ENCODE measurements at regions of chr1 and their contacts with region 1.

Region 1: GRCh38 chr1:180415985-180416633 is 86.3 kb downstream of the ACBD6 start:
- DNase-seq: peak; percentile 41
- H3K4me3 ChIP-seq: no peak overlapping the region
- H3K27ac ChIP-seq: no peak overlapping the region
- H3K4me1 ChIP-seq: no peaks in the 10 kb centered on the region
- H3K27me3 ChIP-seq: no peaks in the 10 kb centered on the region
- CTCF ChIP-seq: peak; percentile 27 to 39
- POLR2A ChIP-seq: no peak

Region 2: GRCh38 chr1:180178511-180179161 is 237.5 kb before region 1 on chr1:
- CTCF ChIA-PET with region 1: interaction called, 23 read pairs
- POLR2A ChIA-PET with region 1: no interaction called
- dilution Hi-C with region 1: no loop called
- intact Hi-C with region 1: no loop called
- DNase-seq: peak; percentile 64
- H3K4me3 ChIP-seq: no peak overlapping the region
- H3K27ac ChIP-seq: no peak overlapping the region
- H3K4me1 ChIP-seq: no peaks in the 10 kb centered on the region
- H3K27me3 ChIP-seq: no peaks in the 10 kb centered on the region
- CTCF ChIP-seq: peak; percentile 91 to 93
- POLR2A ChIP-seq: no peak

Region 3: DNA sequence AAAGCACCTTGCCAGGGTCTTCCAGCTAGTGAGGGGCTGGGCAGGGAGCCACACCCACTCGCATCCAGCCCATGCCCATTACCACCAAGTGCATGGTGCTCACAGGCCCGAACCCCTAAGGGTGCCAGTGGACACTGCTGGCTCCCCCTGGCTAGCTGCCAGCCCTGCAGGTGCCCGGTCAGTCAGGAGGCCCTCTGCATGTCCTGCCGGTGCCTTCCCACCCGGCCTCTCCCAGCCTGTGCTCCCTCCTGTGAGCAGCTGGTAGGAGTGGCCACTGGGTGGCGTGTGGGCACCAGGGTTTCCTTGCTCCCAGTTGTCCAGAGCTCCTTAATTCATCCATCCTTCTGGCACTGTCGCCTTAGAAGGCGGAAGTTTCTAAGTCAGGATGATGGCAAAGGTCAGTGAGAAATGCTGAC is 228.0 kb before region 1 on chr1:
- CTCF ChIA-PET with region 1: interaction called, 70 read pairs
- POLR2A ChIA-PET with region 1: no interaction called
- dilution Hi-C with region 1: no loop called
- intact Hi-C with region 1: loop called (anchors 1 kb)
- DNase-seq: peak; percentile 44
- H3K4me3 ChIP-seq: no peak overlapping the region
- H3K27ac ChIP-seq: no peak overlapping the region
- H3K4me1 ChIP-seq: no peaks in the 10 kb centered on the region
- H3K27me3 ChIP-seq: no peaks in the 10 kb centered on the region
- CTCF ChIP-seq: peak; percentile 67 to 80
- POLR2A ChIP-seq: no peak

Region 4: DNA sequence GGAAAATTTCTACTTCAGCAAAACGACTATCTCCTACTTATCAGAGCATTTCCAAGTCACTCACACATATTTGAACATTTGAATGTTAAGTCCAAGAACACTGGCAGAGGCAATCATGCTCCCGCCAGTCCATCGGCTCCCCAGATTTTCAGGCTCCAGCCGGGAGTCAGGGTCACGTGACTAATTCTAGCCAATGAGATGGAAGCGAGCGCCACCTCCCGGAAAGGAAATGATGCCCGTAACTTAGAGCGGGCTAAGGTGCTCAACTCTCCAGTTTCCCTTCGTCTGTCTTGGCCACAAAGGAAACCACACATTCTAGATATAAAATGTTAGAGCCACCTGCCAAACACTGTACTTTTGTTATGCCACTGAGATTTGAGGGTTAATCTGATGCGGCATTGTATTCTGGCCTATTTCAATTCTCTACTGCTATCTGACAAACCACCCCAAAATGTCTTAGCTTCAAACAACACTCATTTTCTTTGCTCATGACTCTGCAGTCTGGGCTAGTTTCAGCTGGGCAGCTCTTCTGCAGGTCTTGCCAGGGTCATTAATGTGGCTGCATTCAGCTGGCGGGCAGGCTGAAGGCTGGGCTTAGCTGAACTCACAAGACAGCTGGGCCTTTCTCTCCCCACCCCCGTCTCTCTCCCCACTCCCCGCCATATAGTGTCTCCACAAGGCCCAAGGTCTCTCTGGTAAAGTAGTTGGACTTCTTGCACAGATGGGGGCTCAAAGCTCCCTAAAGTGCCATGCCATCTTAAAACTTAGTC is 202.5 kb before region 1 on chr1:
- CTCF ChIA-PET with region 1: no interaction called
- POLR2A ChIA-PET with region 1: no interaction called
- dilution Hi-C with region 1: no loop called
- intact Hi-C with region 1: no loop called
- DNase-seq: peak; percentile 28
- H3K4me3 ChIP-seq: no peak overlapping the region
- H3K27ac ChIP-seq: no peak overlapping the region
- H3K4me1 ChIP-seq: no peaks in the 10 kb centered on the region
- H3K27me3 ChIP-seq: peaks cover 0 to 3% of the 10 kb centered on the region in 2 experiments
- CTCF ChIP-seq: peak in 1 of 2 donors; percentile 1
- POLR2A ChIP-seq: no peak

Region 5: GRCh38 chr1:180365039-180365438 is 51.1 kb before region 1 on chr1:
- CTCF ChIA-PET with region 1: interaction called, 6 read pairs
- POLR2A ChIA-PET with region 1: no interaction called
- dilution Hi-C with region 1: no loop called
- intact Hi-C with region 1: loop called (anchors 5 kb)
- DNase-seq: no peak
- H3K4me3 ChIP-seq: no peak overlapping the region
- H3K27ac ChIP-seq: no peak overlapping the region
- H3K4me1 ChIP-seq: peaks cover 9% of the 10 kb centered on the region
- H3K27me3 ChIP-seq: no peaks in the 10 kb centered on the region
- CTCF ChIP-seq: no peak
- POLR2A ChIP-seq: no peak

Measured in endothelial cell of umbilical vein (primary cell).